Prostate gland (tissue), 2 donors: ENCODE measurements at regions of chr4 and their contacts with region 1.

Region 1: GRCh38 chr4:182806259-182807252 is 110.6 kb downstream of the DCTD start:
- DNase-seq: peak; percentile 43
- H3K4me3 ChIP-seq: peak overlapping the region; percentile 26 to 27
- H3K27ac ChIP-seq: no peak overlapping the region
- H3K4me1 ChIP-seq: no peaks in the 10 kb centered on the region
- H3K27me3 ChIP-seq: no peaks in the 10 kb centered on the region
- CTCF ChIP-seq: peak; percentile 50 to 78 (median 74)
- POLR2A ChIP-seq: no peak

Region 2: DNA sequence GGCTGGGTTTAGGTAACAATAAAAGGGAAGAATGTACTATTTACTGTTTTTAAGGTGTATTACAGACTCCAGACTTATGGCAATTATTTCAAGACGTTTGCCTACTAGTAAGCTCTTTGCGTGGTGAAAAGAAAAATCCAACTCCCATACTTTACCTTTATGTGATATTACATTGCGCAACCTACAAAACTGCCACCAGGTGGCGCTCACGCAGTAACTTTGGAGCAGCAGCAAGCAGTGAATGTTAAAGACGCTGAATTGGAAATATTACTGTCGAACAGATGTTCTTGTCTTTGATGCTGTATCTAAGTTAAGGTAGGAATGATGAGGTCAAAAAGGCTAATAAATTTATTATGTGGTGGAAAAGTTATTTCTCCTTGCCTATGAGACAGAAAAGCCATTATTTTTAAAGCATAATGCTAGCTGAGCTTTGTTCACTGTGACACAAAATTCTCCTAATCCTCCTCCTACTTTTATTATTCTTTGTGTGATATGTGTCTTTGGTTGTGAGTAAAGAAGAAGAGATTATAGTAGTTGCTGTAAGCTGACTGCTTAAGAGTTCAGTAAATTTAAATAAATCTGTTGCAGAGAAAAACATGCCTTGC is 1663.2 kb before region 1 on chr4:
- intact Hi-C with region 1: loop called (anchors 5 kb)
- DNase-seq: peak; percentile 65
- H3K4me3 ChIP-seq: no peak overlapping the region
- H3K27ac ChIP-seq: no peak overlapping the region
- H3K4me1 ChIP-seq: no peaks in the 10 kb centered on the region
- H3K27me3 ChIP-seq: no peaks in the 10 kb centered on the region
- CTCF ChIP-seq: peak; percentile 69 to 96 (median 78)
- POLR2A ChIP-seq: no peak

Region 3: DNA sequence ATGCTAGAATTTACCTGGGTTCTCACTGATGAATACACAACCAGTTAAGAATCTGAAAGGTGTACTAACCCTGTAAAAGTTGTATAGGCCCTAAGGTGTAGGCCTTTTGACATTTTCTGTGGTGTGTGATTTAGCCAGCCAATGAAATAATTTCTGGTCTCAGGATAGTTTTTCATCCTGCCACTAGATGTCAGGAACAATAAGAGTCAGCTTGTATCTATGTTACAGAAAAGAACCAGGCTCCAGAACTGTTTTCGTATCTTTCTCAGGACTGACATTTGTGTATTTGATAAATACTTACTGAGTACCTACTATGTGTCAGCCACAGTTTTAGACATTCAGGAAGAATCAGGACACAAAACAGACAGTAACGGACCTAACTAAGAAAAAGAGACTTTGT is 1237.0 kb before region 1 on chr4:
- intact Hi-C with region 1: loop called (anchors 10 kb)
- DNase-seq: no peak
- H3K4me3 ChIP-seq: no peak overlapping the region
- H3K27ac ChIP-seq: no peak overlapping the region
- H3K4me1 ChIP-seq: no peaks in the 10 kb centered on the region
- H3K27me3 ChIP-seq: no peaks in the 10 kb centered on the region
- CTCF ChIP-seq: peak in 2 of 4 experiments; percentile 20 to 40
- POLR2A ChIP-seq: no peak

Region 4: DNA sequence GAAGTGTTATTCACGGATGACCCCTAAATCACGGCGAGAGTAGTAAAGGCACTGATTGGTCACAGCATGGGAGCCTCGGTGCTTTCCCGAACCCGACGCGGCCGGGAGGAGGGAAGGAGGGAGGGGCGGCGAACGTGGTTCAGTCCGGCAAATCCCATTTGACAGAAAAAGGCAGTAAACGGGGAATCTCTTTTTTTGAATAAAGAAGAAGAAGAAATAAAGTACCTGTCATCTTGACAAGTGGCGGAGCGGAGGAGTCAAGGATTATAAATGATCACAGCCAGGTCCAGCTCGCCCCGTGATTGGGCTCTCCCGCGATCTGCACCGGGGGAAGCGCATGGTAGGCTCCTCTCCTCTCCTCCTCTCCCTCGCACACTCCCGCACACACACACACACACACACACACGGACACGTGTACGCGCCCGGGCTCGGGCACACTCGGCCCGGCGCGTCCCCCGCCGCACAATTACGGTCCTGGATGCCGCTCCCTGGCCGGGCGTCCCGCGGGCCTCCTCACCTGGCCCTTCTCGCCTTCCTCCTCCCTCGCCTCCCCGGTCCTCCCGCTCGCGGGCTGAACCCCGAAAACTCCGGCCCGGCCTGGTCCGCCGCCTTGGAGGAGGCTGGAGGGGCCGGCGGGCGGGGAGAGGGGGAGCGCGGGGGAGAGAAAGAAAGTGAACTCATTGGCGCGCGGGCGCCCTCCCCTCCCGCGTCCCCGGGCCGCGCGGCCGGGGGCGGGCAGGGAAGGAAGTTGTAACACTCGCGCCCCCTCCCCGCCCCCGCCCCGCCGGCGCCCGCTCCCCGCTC is 662.5 kb before region 1 on chr4:
- intact Hi-C with region 1: loop called (anchors 5 kb)
- DNase-seq: no peak
- H3K4me3 ChIP-seq: peak overlapping the region; percentile 47 to 51
- H3K27ac ChIP-seq: no peak overlapping the region
- H3K4me1 ChIP-seq: peaks cover 5% of the 10 kb centered on the region
- H3K27me3 ChIP-seq: peaks cover 2% of the 10 kb centered on the region
- CTCF ChIP-seq: no peak
- POLR2A ChIP-seq: no peak

Region 5: GRCh38 chr4:182246401-182247205 is 560.0 kb before region 1 on chr4:
- intact Hi-C with region 1: loop called (anchors 5 kb)
- DNase-seq: peak; percentile 51
- H3K4me3 ChIP-seq: no peak overlapping the region
- H3K27ac ChIP-seq: no peak overlapping the region
- H3K4me1 ChIP-seq: no peaks in the 10 kb centered on the region
- H3K27me3 ChIP-seq: no peaks in the 10 kb centered on the region
- CTCF ChIP-seq: no peak
- POLR2A ChIP-seq: no peak

Region 6: GRCh38 chr4:182478475-182478874 is 328.1 kb before region 1 on chr4:
- intact Hi-C with region 1: loop called (anchors 5 kb)
- DNase-seq: no peak
- H3K4me3 ChIP-seq: no peak overlapping the region
- H3K27ac ChIP-seq: no peak overlapping the region
- H3K4me1 ChIP-seq: no peaks in the 10 kb centered on the region
- H3K27me3 ChIP-seq: no peaks in the 10 kb centered on the region
- CTCF ChIP-seq: peak in 3 of 4 experiments; percentile 44 to 65 (median 50)
- POLR2A ChIP-seq: no peak

Region 7: GRCh38 chr4:182555997-182556418 is 250.5 kb before region 1 on chr4:
- intact Hi-C with region 1: no loop called
- DNase-seq: no peak
- H3K4me3 ChIP-seq: no peak overlapping the region
- H3K27ac ChIP-seq: no peak overlapping the region
- H3K4me1 ChIP-seq: no peaks in the 10 kb centered on the region
- H3K27me3 ChIP-seq: no peaks in the 10 kb centered on the region
- CTCF ChIP-seq: no peak
- POLR2A ChIP-seq: no peak

Region 8: DNA sequence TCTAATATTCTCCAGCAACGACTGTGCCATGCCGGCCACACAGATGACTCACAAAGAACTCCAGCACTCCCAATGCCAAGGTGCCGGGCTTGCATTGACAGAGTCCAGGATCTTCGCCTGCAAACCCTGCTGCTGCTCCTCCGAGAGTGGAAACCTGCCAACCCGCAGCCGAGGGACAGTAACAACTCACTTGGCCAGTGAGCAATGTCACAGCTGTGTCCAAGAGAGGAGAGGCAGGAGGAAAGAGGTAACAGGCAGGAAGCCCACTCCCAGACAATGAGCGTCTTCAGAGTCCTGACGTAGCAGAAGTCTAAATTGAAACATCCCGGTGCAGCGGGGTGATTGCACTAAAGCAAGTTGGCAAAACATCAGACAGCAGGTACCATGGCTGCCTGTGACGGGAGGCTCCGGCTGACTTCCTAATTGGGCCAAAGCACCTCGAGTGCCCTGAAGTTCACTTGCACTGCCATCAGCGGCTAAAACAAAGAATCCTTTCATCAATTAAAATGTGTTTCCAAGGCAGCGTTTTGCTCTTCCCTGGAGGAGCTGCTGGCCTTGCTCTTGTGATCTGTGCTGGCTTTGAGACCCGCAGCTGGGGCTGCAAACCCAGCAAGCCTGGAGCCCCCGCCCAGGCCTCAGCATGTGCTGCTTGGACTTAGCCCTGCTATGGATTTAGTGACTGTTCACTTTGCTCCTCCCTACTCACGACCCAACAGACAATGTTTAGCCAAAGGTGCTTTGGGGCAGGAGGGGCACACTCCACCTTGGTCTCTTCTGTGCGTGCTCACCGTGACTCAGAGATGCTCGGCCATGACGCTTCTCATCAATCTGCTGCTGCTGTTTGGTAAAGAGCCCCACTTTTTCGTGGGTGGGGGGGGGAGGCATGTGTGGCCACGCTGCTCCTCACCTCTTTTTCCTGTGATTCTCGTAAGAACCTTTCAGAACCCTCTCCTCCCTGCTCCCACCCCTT is 74.1 kb after region 1 on chr4:
- intact Hi-C with region 1: no loop called
- DNase-seq: peak; percentile 31
- H3K4me3 ChIP-seq: no peak overlapping the region
- H3K27ac ChIP-seq: no peak overlapping the region
- H3K4me1 ChIP-seq: no peaks in the 10 kb centered on the region
- H3K27me3 ChIP-seq: no peaks in the 10 kb centered on the region
- CTCF ChIP-seq: no peak
- POLR2A ChIP-seq: no peak